ENCODE measurements at regions of chr12 and their contacts with region 1.

Region 1: DNA sequence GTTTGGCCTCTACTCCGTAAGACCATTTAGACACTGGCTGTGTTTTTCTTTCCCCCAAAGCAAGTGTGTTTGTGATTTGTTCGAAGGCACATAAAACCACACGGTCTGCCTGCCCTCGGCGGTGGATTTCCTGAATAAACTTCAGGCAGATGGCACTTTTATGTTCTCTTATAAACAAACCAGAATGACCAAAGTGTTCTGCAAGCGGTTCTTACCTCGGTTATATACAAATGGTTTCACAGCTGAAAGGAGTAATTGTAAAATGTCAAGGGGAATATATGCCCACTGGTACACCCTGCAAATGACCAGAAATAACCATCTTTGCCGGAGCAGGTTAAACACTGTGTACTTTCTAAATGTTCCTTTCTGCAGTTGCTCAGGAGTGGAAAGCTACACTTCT is 1475.8 kb upstream of the TMEM132C start:
- DNase-seq: no peak
- H3K4me3 ChIP-seq: no peak overlapping the region
- H3K4me3 Mint-ChIP-seq: no peak overlapping the region
- H3K27ac Mint-ChIP-seq: no peak overlapping the region
- H3K4me1 ChIP-seq: no peaks in the 10 kb centered on the region
- H3K4me1 Mint-ChIP-seq: no peaks in the 10 kb centered on the region
- H3K27me3 ChIP-seq: no peaks in the 10 kb centered on the region
- H3K27me3 Mint-ChIP-seq: no peaks in the 10 kb centered on the region
- CTCF ChIP-seq: no peak

Region 2: GRCh38 chr12:126069549-126070165 is 721.5 kb before region 1 on chr12:
- CTCF ChIA-PET with region 1: no interaction called
- POLR2A ChIA-PET with region 1: no interaction called
- intact Hi-C with region 1: no loop called
- DNase-seq: peak; percentile 60 to 66
- H3K4me3 ChIP-seq: no peak overlapping the region
- H3K4me3 Mint-ChIP-seq: no peak overlapping the region
- H3K27ac Mint-ChIP-seq: no peak overlapping the region
- H3K4me1 ChIP-seq: no peaks in the 10 kb centered on the region
- H3K4me1 Mint-ChIP-seq: no peaks in the 10 kb centered on the region
- H3K27me3 ChIP-seq: no peaks in the 10 kb centered on the region
- H3K27me3 Mint-ChIP-seq: no peaks in the 10 kb centered on the region
- CTCF ChIP-seq: peak; percentile 53 to 69

Region 3: DNA sequence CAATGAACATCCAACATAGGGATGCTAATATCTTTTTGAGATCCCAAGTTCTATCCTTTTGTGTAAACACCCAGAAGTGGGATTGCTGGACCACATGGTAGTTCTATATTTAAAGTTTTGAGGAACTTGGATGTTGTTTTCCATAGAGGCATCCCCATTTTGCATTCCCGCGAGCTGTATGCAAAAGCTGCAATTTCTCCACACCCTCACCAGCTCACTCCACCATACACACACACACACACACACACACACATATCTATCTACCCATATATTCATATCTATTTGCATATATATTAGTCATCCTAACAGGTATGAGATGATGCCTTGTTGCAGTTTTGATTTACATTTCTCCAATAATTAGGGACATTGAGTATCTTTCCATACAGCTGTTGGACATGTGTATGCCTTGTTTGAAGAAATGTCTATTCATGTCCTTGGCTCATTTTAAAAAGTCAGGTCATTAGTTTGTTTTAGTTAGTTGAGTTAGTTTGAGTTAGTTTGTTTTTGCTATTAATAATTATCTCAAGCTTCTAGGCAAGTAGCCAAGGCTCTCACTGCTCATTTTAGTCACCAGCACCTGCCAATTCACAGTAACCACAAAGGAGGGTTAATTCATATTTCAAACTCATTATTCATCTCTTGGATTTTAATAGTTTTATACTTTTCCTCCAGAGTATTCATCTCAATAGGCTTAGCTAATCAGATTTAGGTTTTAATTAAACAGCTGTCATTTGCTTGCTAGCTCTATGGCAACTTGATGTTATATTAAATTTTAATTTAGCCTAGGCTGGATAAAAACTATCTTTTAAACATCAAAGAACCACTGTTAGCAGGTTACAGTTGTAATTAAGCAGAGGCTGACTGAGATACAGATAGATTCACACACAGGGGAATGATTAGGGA is 39.9 kb after region 1 on chr12:
- CTCF ChIA-PET with region 1: no interaction called
- POLR2A ChIA-PET with region 1: no interaction called
- intact Hi-C with region 1: loop called (anchors 1 kb)
- DNase-seq: no peak
- H3K4me3 ChIP-seq: no peak overlapping the region
- H3K4me3 Mint-ChIP-seq: no peak overlapping the region
- H3K27ac Mint-ChIP-seq: no peak overlapping the region
- H3K4me1 ChIP-seq: no peaks in the 10 kb centered on the region
- H3K4me1 Mint-ChIP-seq: no peaks in the 10 kb centered on the region
- H3K27me3 ChIP-seq: no peaks in the 10 kb centered on the region
- H3K27me3 Mint-ChIP-seq: peaks cover 2% of the 10 kb centered on the region
- CTCF ChIP-seq: no peak

Region 4: DNA sequence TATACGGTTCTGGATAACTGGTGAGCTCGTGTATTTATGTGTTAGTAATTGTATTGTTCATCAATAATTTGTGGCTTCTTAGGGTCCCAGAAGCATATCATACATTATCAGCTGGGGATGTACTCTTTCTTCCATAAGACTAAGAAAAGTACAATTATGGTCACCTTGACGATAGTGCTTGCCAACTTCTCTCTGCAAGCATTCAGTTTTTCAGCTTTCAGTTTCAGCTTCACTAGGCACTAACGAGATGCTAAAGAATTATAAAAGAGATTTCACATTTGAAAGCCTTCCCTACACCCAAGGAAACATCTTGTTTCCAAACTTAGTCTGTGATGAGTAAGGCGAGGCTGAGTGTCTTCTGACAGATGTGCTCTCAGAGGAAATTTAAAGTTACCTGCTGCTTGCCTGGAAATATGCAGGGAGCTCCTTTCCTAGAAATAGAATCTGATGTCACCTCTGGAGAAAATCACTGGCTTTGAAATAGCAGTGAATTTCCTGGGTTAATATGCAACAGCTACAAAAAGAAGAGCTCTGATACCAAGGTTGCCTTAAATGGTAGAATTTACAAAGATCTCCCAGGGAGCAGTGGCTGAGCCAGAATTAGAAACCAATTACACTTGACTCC is 56.0 kb after region 1 on chr12:
- CTCF ChIA-PET with region 1: no interaction called
- POLR2A ChIA-PET with region 1: no interaction called
- intact Hi-C with region 1: no loop called
- DNase-seq: no peak
- H3K4me3 ChIP-seq: no peak overlapping the region
- H3K4me3 Mint-ChIP-seq: no peak overlapping the region
- H3K27ac Mint-ChIP-seq: no peak overlapping the region
- H3K4me1 ChIP-seq: no peaks in the 10 kb centered on the region
- H3K4me1 Mint-ChIP-seq: no peaks in the 10 kb centered on the region
- H3K27me3 ChIP-seq: no peaks in the 10 kb centered on the region
- H3K27me3 Mint-ChIP-seq: no peaks in the 10 kb centered on the region
- CTCF ChIP-seq: no peak

Measured in Caco-2 (cell line).